ENCODE measurements at regions of chr6 and their contacts with region 1.

Region 1: GRCh38 chr6:152184917-152185574 is 377.6 kb downstream of the ESR1 start:
- DNase-seq: peak; percentile 39
- H3K4me3 Mint-ChIP-seq: peak overlapping the region; percentile 78
- H3K27ac Mint-ChIP-seq: peak overlapping the region; percentile 94
- H3K4me1 Mint-ChIP-seq: peaks cover 73% of the 10 kb centered on the region
- H3K27me3 Mint-ChIP-seq: no peaks in the 10 kb centered on the region

Region 2: GRCh38 chr6:151451950-151452749 is 732.9 kb before region 1 on chr6 and contains the start of gene RMND1:
- CTCF ChIA-PET with region 1: no interaction called
- POLR2A ChIA-PET with region 1: no interaction called
- intact Hi-C with region 1: loop called (anchors 1 kb)
- DNase-seq: peak; percentile 100
- H3K4me3 Mint-ChIP-seq: peak within 1 kb of the TSS; percentile 94
- H3K27ac Mint-ChIP-seq: peak within 1 kb of the TSS; percentile 78
- H3K4me1 Mint-ChIP-seq: peaks cover 29% of the 10 kb centered on the region
- H3K27me3 Mint-ChIP-seq: peaks cover 3% of the 10 kb centered on the region
- total RNA-seq, gene RMND1: 22.6 to 23.0 TPM

Region 3: GRCh38 chr6:151757506-151758245 is 427.4 kb before region 1 on chr6:
- CTCF ChIA-PET with region 1: no interaction called
- POLR2A ChIA-PET with region 1: no interaction called
- intact Hi-C with region 1: loop called (anchors 5 kb)
- DNase-seq: peak; percentile 55
- H3K4me3 Mint-ChIP-seq: peak overlapping the region; percentile 42
- H3K27ac Mint-ChIP-seq: peak overlapping the region; percentile 61
- H3K4me1 Mint-ChIP-seq: peaks cover 23% of the 10 kb centered on the region
- H3K27me3 Mint-ChIP-seq: no peaks in the 10 kb centered on the region

Region 4: DNA sequence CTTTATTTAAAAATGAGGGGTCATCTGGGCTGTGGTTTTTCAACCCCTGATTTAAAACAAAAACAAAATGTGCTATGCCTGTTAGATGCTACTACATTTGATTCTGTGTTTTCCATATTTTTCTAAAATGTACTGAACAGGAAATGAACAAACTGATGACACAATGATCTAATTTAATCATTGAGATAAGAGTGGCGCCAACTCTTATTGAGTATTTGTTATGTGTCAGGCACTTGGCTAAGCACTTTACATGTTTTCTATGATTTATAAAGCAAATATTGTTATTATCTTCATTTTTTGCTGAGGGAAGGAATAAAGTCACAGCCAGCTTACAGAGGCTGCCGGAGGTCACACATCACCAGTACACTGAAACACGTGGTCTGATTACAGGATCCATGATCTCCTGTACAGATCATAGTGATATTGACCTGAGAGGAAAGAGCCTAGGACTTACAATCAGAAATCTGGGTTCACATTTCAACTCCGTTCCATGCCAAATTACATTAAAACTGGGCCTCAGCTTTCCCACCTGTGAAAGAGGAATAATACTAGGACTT is 210.9 kb before region 1 on chr6:
- CTCF ChIA-PET with region 1: no interaction called
- POLR2A ChIA-PET with region 1: no interaction called
- intact Hi-C with region 1: no loop called
- DNase-seq: no peak
- H3K4me3 Mint-ChIP-seq: no peak overlapping the region
- H3K27ac Mint-ChIP-seq: no peak overlapping the region
- H3K4me1 Mint-ChIP-seq: no peaks in the 10 kb centered on the region
- H3K27me3 Mint-ChIP-seq: no peaks in the 10 kb centered on the region

Region 5: DNA sequence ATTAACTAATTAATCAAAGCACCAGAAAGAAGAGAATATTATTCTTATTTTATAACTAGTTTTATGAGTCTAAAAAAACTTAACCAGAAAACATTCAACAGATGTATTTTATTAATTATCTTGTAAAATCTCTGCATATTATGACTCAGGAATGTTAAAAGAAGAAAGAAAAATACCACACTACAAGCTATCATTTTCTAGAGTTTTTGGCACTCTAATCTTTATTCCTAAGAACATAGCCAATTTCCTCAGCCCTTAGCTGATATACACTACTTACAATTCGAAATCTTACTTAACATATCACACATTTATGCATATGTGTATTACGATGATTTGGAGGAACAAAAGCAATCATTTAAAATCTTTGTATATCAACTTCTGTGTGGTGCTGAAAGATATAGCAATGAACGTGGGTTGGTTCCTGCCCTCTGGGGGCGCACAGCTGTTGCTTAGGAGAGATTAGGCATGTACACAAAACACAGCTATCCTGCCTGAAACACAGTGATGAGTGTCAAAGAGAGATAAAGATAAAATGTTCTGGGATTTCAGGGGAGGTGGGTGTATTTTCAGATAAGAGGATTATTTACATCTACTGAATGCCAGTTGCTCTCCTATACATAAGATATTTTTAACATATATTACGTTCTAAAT is 47.6 kb after region 1 on chr6:
- CTCF ChIA-PET with region 1: interaction called, 4 read pairs
- POLR2A ChIA-PET with region 1: interaction called, 4 read pairs
- intact Hi-C with region 1: loop called (anchors 2 kb)
- DNase-seq: peak; percentile 54
- H3K4me3 Mint-ChIP-seq: peak overlapping the region; percentile 67
- H3K27ac Mint-ChIP-seq: peak overlapping the region; percentile 70
- H3K4me1 Mint-ChIP-seq: peaks cover 23% of the 10 kb centered on the region
- H3K27me3 Mint-ChIP-seq: no peaks in the 10 kb centered on the region

Region 6: DNA sequence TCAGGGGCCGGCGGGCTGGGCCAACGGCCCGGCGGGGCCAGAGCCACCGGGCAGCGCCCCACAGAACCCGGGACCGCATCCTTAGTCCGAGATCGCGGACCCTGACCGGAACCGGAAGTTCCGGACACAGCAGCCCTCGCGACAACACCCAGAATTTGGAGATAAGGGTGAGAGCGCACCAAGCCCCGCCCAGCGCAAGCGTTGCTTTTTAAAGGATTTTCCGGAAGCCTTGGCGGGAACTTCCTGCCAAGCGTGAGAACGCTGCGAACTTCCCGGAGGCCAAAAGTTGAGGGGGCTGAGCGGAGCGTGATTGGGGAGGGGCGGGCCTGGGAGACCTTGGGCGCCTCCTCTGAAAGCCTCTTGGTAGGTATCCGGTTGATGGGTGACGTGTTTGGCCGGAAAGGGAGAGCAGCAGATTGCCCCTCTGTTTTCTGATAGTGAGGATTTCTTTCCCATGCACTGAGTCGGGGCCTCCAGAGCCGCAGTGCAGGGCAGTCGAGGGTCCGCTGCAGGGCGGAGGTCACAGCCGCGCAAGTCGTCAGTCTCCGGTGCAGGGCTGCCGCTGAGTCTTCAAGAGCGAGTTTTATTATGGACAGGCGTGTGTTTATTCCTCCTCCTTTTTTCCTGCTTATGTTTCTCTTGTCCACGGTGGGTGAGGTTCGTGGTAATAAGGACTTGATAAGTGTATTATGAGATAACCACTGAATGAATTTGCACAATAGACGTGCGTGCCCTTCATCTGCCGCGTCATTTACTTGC is 817.7 kb after region 1 on chr6 and contains the start of gene MTRF1L:
- CTCF ChIA-PET with region 1: no interaction called
- POLR2A ChIA-PET with region 1: no interaction called
- intact Hi-C with region 1: loop called (anchors 5 kb)
- DNase-seq: peak; percentile 95
- H3K4me3 Mint-ChIP-seq: peak within 1 kb of the TSS; percentile 98
- H3K27ac Mint-ChIP-seq: peak within 1 kb of the TSS; percentile 98
- H3K4me1 Mint-ChIP-seq: peaks cover 30% of the 10 kb centered on the region
- H3K27me3 Mint-ChIP-seq: no peaks in the 10 kb centered on the region
- total RNA-seq, gene MTRF1L: 16.9 to 20.1 TPM

Measured in activated CD4-positive, alpha-beta memory T cell treated with anti-CD3 and anti-CD28 coated beads for 36 hours (primary cell).